ENCODE measurements at regions of chr1 and their contacts with region 1.

Region 1: DNA sequence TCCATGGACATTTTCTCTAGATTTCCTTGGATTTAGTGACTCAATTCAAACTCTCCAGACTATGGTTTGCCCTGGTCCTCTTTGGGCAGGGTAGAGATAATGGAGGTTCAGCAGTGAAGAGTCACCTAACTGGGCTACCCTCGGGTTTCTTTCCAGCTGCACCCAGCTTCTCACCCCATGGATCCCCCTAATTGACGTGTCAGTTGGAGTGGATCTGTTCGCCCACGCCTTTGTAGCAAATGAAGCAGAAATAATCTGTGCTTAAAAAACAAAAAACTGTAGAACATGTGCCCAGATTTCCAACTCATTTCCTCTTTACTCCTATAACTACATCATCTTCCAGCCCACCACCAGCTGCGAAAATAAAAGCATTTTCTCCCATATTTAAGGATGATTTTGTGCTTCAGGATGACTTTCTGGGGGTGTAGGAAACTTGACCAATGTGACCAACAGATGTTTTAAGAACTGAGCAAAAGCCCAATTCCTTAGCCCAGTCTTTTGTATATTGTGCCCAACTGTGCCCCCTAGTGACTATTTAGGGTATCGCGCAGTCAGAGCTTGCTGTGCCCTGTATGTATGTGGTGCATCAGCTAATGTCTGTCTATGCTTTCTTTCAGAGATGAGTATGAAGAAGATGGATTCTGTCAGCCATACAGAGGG is 66.5 kb upstream of the UBE2U start:
- DNase-seq: peak; percentile 65
- H3K4me3 ChIP-seq: no peak overlapping the region
- H3K27ac ChIP-seq: no peak overlapping the region
- H3K27me3 ChIP-seq: no peaks in the 10 kb centered on the region
- CTCF ChIP-seq: peak; percentile 97

Region 2: DNA sequence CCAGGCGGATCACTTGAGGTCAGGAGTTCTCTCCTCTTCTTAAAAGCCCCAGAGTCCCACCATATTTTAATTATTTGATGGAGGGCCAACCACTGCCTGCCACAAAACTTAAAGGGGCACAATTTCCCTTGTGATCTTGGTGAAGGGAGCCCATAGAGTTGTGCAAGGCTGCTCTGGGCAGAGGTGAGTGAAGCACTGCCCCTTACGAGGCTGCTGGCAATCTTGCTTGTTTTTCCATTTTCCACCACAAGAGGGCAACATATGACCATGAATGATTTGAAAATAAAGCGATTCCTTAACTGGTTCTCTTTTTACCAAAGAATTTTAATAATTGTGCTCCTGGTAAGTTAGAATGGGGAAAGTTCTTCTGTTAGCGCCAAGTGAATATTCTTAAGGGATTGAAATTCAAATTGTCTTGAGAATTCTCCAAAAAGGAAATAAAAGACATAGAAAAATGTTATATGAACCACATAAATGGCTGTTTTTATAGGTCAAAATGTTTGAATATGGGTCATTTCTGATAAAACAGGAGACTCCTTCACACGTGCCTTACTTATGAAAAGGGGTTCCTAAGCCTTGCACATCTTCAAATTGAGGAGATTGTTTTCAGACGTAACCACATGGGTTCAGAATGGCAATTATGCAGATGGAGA is 521.0 kb before region 1 on chr1:
- CTCF ChIA-PET with region 1: interaction called, 21 read pairs
- POLR2A ChIA-PET with region 1: no interaction called
- DNase-seq: peak; percentile 57
- H3K4me3 ChIP-seq: no peak overlapping the region
- H3K27ac ChIP-seq: no peak overlapping the region
- H3K27me3 ChIP-seq: no peaks in the 10 kb centered on the region
- CTCF ChIP-seq: peak; percentile 65

Region 3: GRCh38 chr1:63691701-63692425 is 445.0 kb before region 1 on chr1:
- CTCF ChIA-PET with region 1: interaction called, 86 read pairs
- POLR2A ChIA-PET with region 1: no interaction called
- DNase-seq: peak; percentile 68
- H3K4me3 ChIP-seq: no peak overlapping the region
- H3K27ac ChIP-seq: no peak overlapping the region
- H3K27me3 ChIP-seq: peaks cover 10% of the 10 kb centered on the region
- CTCF ChIP-seq: peak; percentile 68

Region 4: GRCh38 chr1:63920154-63921117 is 216.4 kb before region 1 on chr1:
- CTCF ChIA-PET with region 1: interaction called, 37 read pairs
- POLR2A ChIA-PET with region 1: no interaction called
- DNase-seq: peak; percentile 39
- H3K4me3 ChIP-seq: no peak overlapping the region
- H3K27ac ChIP-seq: no peak overlapping the region
- H3K27me3 ChIP-seq: peaks cover 3% of the 10 kb centered on the region
- CTCF ChIP-seq: peak; percentile 51

Region 5: GRCh38 chr1:63955370-63956145 is 181.3 kb before region 1 on chr1:
- CTCF ChIA-PET with region 1: no interaction called
- POLR2A ChIA-PET with region 1: no interaction called
- DNase-seq: no peak
- H3K4me3 ChIP-seq: no peak overlapping the region
- H3K27ac ChIP-seq: no peak overlapping the region
- H3K27me3 ChIP-seq: no peaks in the 10 kb centered on the region
- CTCF ChIP-seq: no peak

Region 6: GRCh38 chr1:64124704-64125440 is 12.0 kb before region 1 on chr1:
- CTCF ChIA-PET with region 1: interaction called, 21 read pairs
- POLR2A ChIA-PET with region 1: no interaction called
- DNase-seq: no peak
- H3K4me3 ChIP-seq: no peak overlapping the region
- H3K27ac ChIP-seq: no peak overlapping the region
- H3K27me3 ChIP-seq: peaks cover 6% of the 10 kb centered on the region
- CTCF ChIP-seq: no peak

Region 7: DNA sequence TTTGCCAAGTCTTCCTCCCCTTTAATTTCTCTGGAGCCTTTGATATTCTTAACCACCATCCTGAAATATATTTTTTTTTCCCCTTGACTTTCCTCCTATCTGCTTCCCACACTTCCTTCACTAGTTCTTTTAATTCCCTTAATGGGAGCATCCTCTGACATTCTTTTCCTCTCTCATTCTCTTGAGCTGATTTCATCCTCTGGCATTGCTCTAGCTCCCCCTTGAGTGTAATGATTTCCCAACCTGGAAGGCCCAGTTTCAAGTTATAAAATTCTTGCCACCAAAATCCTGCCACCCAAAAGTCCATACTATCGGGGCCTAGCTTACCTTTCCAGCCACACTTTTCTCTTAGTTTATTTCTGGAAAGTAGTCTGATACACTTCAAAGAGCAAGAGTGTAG is 27.1 kb after region 1 on chr1:
- CTCF ChIA-PET with region 1: interaction called, 19 read pairs
- POLR2A ChIA-PET with region 1: interaction called, 3 read pairs
- DNase-seq: no peak
- H3K4me3 ChIP-seq: no peak overlapping the region
- H3K27ac ChIP-seq: no peak overlapping the region
- H3K27me3 ChIP-seq: no peaks in the 10 kb centered on the region
- CTCF ChIP-seq: peak; percentile 69

Region 8: DNA sequence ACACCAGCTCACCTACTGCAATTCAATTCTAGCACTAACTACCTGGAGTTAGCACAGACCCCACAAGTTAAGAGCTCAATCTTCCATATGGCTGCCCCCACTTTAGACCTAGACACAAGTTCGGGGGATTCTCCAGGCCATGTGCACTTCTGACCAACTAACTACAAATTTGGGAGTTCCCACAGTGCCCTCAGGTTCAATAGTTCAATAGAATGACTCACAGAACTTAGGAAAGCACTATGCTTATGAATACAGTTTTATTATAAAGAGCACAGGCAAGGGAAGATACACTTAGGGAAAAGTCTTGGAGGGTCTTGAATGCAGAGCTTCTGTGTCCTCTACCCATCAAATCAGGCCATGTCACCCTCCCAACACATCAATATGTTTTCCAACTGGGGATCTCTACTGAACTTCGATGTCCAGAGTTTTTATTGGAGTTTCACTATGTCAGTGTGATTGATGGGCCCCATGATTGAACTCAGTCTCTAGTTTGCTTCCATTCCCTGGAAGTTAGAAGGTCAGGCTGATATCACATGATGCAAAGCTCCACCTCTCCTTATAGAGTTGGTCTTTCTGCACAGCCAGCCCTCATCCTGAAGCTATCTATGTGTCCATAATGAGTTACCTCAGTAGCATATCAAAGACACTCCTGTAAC is 654.1 kb after region 1 on chr1:
- CTCF ChIA-PET with region 1: no interaction called
- POLR2A ChIA-PET with region 1: no interaction called
- DNase-seq: no peak
- H3K4me3 ChIP-seq: no peak overlapping the region
- H3K27ac ChIP-seq: no peak overlapping the region
- H3K27me3 ChIP-seq: no peaks in the 10 kb centered on the region
- CTCF ChIP-seq: no peak

Measured in AG04450 (cell line).